HCT116 (cell line): ENCODE measurements at regions of chr6 and their contacts with region 1.

Region 1: DNA sequence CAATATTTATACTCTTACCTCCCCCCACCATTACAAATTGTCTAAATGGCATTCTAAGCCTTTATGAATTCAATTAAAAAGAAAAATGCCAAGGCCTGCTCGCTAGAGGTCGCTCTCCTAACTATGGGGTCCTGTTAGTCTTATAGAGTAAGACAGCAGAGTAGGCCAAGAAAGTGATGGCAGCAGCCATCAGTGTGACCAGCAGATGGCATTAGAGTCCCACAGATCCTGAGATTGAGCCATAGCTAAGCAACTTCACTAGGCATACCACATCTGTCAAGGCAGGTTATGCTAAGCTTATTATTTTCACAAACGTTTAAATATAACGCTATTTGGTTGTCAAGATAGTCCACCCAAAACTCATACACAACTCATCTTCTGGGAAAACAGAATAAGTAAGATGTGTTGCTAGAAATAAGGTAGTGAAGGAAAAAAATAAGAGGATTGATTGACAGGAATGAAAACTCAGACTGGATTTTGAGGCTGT is 57.6 kb upstream of the SCAF8 start:
- DNase-seq: peak; percentile 94
- ATAC-seq: peak; percentile 99
- H3K4me3 ChIP-seq: no peak overlapping the region
- H3K27ac ChIP-seq: no peak overlapping the region
- H3K4me1 ChIP-seq: no peaks in the 10 kb centered on the region
- H3K27me3 ChIP-seq: no peaks in the 10 kb centered on the region
- CTCF ChIP-seq: peak; percentile 99 to 100 (median 99)
- POLR2A ChIP-seq: no peak
- RAD21 ChIP-seq: peak; percentile 100

Region 2: GRCh38 chr6:154500769-154501577 is 174.7 kb before region 1 on chr6:
- CTCF ChIA-PET with region 1: interaction called, 10 read pairs
- POLR2A ChIA-PET with region 1: no interaction called
- RAD21 ChIA-PET with region 1: no interaction called
- intact Hi-C with region 1: no loop called
- DNase-seq: no peak
- ATAC-seq: peak; percentile 84
- H3K4me3 ChIP-seq: no peak overlapping the region
- H3K27ac ChIP-seq: no peak overlapping the region
- H3K4me1 ChIP-seq: peaks cover 2 to 11% of the 10 kb centered on the region in 2 experiments; a peak in 2 of 4 replicates
- H3K27me3 ChIP-seq: no peaks in the 10 kb centered on the region
- CTCF ChIP-seq: peak; percentile 46 to 83 (median 61); a peak in 5 of 6 replicates
- POLR2A ChIP-seq: no peak
- RAD21 ChIP-seq: peak; percentile 59

Region 3: GRCh38 chr6:154805288-154805911 is 129.8 kb after region 1 on chr6:
- CTCF ChIA-PET with region 1: interaction called, 61 read pairs
- POLR2A ChIA-PET with region 1: no interaction called
- RAD21 ChIA-PET with region 1: interaction called in 1 of 2 experiments, 5 read pairs
- intact Hi-C with region 1: loop called (anchors 1 kb)
- DNase-seq: peak; percentile 31
- ATAC-seq: no peak
- H3K4me3 ChIP-seq: no peak overlapping the region
- H3K27ac ChIP-seq: no peak overlapping the region
- H3K4me1 ChIP-seq: no peaks in the 10 kb centered on the region
- H3K27me3 ChIP-seq: no peaks in the 10 kb centered on the region
- CTCF ChIP-seq: peak in 2 of 3 experiments; percentile 52 to 68; a peak in 4 of 6 replicates
- POLR2A ChIP-seq: no peak
- RAD21 ChIP-seq: peak; percentile 78

Region 4: GRCh38 chr6:154928325-154928922 is 252.8 kb after region 1 on chr6:
- CTCF ChIA-PET with region 1: interaction called, 13 read pairs
- POLR2A ChIA-PET with region 1: no interaction called
- RAD21 ChIA-PET with region 1: interaction called in 1 of 2 experiments, 3 read pairs
- intact Hi-C with region 1: loop called (anchors 1 kb)
- DNase-seq: peak; percentile 49
- ATAC-seq: peak; percentile 58
- H3K4me3 ChIP-seq: no peak overlapping the region
- H3K27ac ChIP-seq: no peak overlapping the region
- H3K4me1 ChIP-seq: peaks cover 21 to 23% of the 10 kb centered on the region in 2 experiments
- H3K27me3 ChIP-seq: no peaks in the 10 kb centered on the region
- CTCF ChIP-seq: peak; percentile 71 to 91 (median 89)
- POLR2A ChIP-seq: no peak
- RAD21 ChIP-seq: peak; percentile 97

Region 5: DNA sequence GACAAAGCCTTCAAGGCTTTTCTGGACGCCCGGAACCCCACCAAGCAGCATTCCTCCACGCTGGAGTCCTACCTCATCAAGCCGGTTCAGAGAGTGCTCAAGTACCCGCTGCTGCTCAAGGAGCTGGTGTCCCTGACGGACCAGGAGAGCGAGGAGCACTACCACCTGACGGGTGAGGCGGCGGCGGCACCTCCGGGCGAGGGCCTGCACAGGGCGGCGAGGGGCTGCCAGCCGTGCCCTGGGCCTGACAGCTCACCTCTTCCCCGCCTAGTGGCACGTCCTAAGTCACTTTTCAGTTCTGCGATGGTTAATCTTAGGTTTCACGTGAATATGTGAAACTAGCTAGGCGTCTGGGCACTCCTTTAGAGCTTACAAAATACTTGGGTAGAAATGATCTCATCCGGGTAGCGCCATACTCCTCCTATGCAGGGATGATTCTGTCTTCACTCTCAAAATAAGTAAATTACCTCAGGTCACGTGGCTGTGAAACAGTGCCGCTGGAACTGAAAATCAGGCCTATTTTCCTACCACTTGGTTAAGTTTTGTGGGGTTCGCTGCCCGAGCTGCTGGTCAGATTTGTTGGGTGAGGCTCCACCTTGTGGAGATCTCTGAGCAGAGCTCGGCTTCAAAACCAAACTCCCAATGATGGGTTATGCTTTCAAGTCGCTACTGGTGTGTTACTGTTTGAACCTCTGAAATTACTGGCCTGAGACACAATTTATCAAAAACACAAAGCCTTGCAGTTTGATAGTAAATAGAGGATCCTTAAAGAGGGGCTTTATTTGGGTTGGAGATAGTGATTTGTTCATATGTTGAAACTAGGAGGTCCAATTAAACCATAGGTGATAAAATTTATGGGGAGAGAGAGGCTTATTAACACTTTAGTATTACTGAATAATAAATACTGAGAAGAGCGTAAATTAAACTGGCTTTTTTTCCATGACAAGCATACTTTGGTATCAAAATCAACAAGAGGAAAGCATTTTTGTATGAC is 572.7 kb after region 1 on chr6:
- CTCF ChIA-PET with region 1: interaction called, 9 read pairs
- POLR2A ChIA-PET with region 1: no interaction called
- RAD21 ChIA-PET with region 1: no interaction called
- intact Hi-C with region 1: loop called (anchors 5 kb)
- DNase-seq: peak; percentile 21
- ATAC-seq: peak; percentile 74
- H3K4me3 ChIP-seq: no peak overlapping the region
- H3K27ac ChIP-seq: no peak overlapping the region
- H3K4me1 ChIP-seq: peaks cover 0 to 12% of the 10 kb centered on the region in 2 experiments; a peak in 2 of 4 replicates
- H3K27me3 ChIP-seq: no peaks in the 10 kb centered on the region
- CTCF ChIP-seq: peak; percentile 57 to 70 (median 59); a peak in 5 of 6 replicates
- POLR2A ChIP-seq: no peak
- RAD21 ChIP-seq: peak; percentile 76